HepG2 (cell line): ENCODE measurements at regions of chr2 and their contacts with region 1.

Region 1: DNA sequence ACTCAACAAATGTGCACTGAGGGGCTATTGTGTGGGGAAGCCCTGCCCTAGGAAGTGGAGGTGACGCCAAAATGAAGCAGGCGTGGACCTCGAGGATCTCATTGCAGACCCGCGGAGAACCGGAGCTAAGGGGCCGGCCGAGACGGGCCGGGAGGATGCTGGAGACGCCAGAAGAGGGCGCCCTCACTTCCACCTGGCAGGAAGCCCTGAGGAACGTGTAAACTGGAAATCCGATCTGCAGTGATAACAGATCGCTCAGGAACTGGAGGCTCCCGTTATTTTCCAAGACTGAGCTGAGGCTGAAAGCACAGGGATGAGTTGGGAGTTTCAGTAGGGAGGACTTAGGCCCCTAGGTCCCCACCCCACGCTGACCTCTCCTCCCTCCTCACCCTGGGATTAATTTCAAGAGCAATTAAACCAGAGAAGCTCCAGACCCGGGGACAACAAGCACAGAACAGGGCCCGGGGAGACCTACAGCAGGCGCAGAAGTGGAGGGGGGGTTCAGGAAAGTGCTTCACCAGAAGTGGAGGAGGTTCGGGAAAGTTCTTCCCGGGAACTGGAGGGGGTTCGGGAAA is 7.7 kb upstream of the COL6A3 start:
- DNase-seq: peak; percentile 51
- ATAC-seq: peak; percentile 92
- H3K4me3 ChIP-seq: no peak overlapping the region
- H3K27ac ChIP-seq: no peak overlapping the region
- H3K4me1 ChIP-seq: peaks cover 7% of the 10 kb centered on the region
- H3K27me3 ChIP-seq: peaks cover 1 to 53% of the 10 kb centered on the region in 2 experiments; a peak in 3 of 5 replicates
- CTCF ChIP-seq: peak; percentile 69
- EP300 ChIP-seq: no peak
- POLR2A ChIP-seq: no peak
- RAD21 ChIP-seq: peak; percentile 40

Region 2: GRCh38 chr2:237572021-237572741 is 150.6 kb after region 1 on chr2:
- CTCF ChIA-PET with region 1: no interaction called
- POLR2A ChIA-PET with region 1: no interaction called
- in situ Hi-C with region 1: no loop called
- intact Hi-C with region 1: loop called (anchors 2 kb)
- DNase-seq: peak; percentile 84
- ATAC-seq: peak; percentile 91
- H3K4me3 ChIP-seq: no peak overlapping the region; a peak in 1 of 6 replicates
- H3K27ac ChIP-seq: no peak overlapping the region
- H3K4me1 ChIP-seq: peaks cover 19% of the 10 kb centered on the region
- H3K27me3 ChIP-seq: peaks cover 0 to 13% of the 10 kb centered on the region in 2 experiments; a peak in 3 of 5 replicates
- CTCF ChIP-seq: peak; percentile 100
- EP300 ChIP-seq: no peak
- POLR2A ChIP-seq: 0 out of 4 replicates have a peak, but pooled peaks of 1 of the 2 experiments have one; percentile 30
- RAD21 ChIP-seq: peak; percentile 100